Activated T-helper 2 cell treated with anti-CD3 and anti-CD28 coated beads, Interferon-gamma antibody, Interleukin-2, Interleukin-4, amounts not matched to agents 10 μg/mL and 5 μg/mL and 100 μg/mL, durations not matched to agents 14 hours and 24 hours and 36 hours (primary cell): ENCODE measurements at regions of chr13 and their contacts with region 1.

Region 1: GRCh38 chr13:110965038-110965754 is 50.3 kb upstream of the ANKRD10 start:
- DNase-seq: peak; percentile 46
- H3K4me3 Mint-ChIP-seq: peak overlapping the region; percentile 26
- H3K27ac Mint-ChIP-seq: peak overlapping the region; percentile 83
- H3K4me1 Mint-ChIP-seq: peaks cover 21% of the 10 kb centered on the region
- H3K27me3 Mint-ChIP-seq: no peaks in the 10 kb centered on the region

Region 2: GRCh38 chr13:111184458-111185401 is 219.5 kb after region 1 on chr13:
- intact Hi-C with region 1: loop called (anchors 10 kb)
- DNase-seq: no peak
- H3K4me3 Mint-ChIP-seq: peak overlapping the region; percentile 37
- H3K27ac Mint-ChIP-seq: peak overlapping the region; percentile 50
- H3K4me1 Mint-ChIP-seq: peaks cover 82% of the 10 kb centered on the region
- H3K27me3 Mint-ChIP-seq: no peaks in the 10 kb centered on the region